ENCODE measurements at regions of chr10 and their contacts with region 1.

Region 1: GRCh38 chr10:5684318-5684970 is at the start of gene TASOR2:
- DNase-seq: peak; percentile 97
- H3K4me3 ChIP-seq: peak within 1 kb of the TSS; percentile 81
- H3K27ac ChIP-seq: peak within 1 kb of the TSS; percentile 77
- H3K4me1 ChIP-seq: peaks cover 47% of the 10 kb centered on the region
- CTCF ChIP-seq: no peak
- total RNA-seq, gene TASOR2: 103 and 113 TPM in 2 replicates

Region 2: DNA sequence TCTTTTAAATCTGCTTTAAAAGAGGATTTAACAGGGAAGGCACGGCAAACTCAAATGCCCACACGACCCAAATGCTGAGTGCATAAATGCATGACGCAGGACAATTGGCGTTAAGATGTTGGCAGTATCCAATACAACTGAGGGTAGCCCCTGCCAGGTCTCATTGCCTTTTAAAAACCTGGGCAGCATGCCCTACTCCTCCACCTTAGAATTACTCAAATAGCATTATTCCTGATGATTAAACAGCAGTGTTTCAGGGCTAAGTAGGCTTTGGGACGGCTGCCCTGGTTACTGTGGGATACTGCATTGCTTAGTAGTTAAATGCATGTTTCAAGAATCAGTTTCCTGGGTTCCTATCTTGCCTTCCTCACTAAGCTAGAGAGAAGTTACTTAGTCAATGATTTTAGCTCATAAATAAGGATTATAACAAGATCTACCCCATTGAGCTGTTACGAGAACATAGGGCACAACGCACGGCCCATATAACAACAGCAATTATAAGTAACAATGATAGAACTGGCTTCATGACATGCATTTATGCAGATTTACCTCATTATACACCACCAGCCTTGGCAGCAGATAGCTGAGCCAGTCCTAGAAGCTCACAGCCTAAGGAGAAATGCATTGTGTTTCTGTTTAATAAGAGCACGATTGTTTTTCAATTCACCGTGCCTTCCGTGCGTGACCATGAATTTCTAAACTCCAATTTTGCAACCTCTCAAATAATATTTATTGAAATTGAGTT is 287.7 kb before region 1 on chr10:
- CTCF ChIA-PET with region 1: no interaction called
- POLR2A ChIA-PET with region 1: no interaction called
- intact Hi-C with region 1: no loop called
- DNase-seq: no peak
- H3K4me3 ChIP-seq: no peak overlapping the region
- H3K27ac ChIP-seq: no peak overlapping the region
- H3K4me1 ChIP-seq: no peaks in the 10 kb centered on the region
- CTCF ChIP-seq: no peak

Region 3: GRCh38 chr10:5618042-5618441 is 66.4 kb before region 1 on chr10:
- CTCF ChIA-PET with region 1: no interaction called
- POLR2A ChIA-PET with region 1: no interaction called
- intact Hi-C with region 1: no loop called
- DNase-seq: no peak
- H3K4me3 ChIP-seq: no peak overlapping the region
- H3K27ac ChIP-seq: no peak overlapping the region
- H3K4me1 ChIP-seq: no peaks in the 10 kb centered on the region
- CTCF ChIP-seq: no peak

Region 4: DNA sequence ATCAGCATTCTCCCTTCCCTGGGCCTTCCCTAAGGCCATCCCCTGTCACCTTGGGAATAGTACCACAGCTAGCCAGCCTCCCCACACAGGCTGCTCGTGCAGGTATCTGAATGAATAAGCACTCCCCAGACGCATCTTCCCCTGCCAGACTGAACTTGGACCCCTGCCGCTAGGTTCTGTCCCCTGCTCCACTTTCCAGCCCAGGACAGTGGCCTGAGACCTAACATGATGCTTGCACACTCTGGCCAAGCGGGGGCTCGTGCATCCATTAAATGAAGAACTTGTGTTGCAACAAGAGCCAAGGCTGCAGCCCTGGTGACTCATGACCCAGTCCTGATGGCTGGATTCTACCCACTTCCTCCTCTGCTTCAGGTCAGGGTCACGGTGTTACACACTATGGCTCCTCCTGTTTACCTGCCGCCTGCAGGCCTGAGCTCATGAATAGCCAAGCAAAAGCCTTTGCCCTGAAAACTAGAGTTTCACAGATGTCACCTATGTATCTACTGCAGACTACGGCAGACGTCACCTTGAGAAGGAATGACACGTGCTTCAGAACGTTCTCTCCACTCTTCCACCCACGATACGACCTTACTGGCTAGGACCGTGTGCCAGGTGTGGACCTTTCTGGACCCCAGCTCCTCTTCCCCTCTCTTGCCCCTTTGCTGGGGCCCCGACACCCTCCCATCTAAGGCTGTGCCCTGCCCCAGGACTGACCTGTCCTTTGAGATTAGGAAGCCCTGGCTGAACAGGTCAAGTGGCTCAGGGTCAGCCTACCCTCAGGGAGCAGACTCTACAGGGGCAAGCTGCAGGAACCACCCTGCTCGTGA is 24.5 kb before region 1 on chr10:
- CTCF ChIA-PET with region 1: interaction called, 7 read pairs
- POLR2A ChIA-PET with region 1: interaction called, 142 read pairs
- intact Hi-C with region 1: loop called (anchors 2 kb)
- DNase-seq: peak; percentile 83
- H3K4me3 ChIP-seq: peak overlapping the region; percentile 30
- H3K27ac ChIP-seq: peak overlapping the region; percentile 100
- H3K4me1 ChIP-seq: peaks cover 98% of the 10 kb centered on the region
- CTCF ChIP-seq: no peak

Region 5: DNA sequence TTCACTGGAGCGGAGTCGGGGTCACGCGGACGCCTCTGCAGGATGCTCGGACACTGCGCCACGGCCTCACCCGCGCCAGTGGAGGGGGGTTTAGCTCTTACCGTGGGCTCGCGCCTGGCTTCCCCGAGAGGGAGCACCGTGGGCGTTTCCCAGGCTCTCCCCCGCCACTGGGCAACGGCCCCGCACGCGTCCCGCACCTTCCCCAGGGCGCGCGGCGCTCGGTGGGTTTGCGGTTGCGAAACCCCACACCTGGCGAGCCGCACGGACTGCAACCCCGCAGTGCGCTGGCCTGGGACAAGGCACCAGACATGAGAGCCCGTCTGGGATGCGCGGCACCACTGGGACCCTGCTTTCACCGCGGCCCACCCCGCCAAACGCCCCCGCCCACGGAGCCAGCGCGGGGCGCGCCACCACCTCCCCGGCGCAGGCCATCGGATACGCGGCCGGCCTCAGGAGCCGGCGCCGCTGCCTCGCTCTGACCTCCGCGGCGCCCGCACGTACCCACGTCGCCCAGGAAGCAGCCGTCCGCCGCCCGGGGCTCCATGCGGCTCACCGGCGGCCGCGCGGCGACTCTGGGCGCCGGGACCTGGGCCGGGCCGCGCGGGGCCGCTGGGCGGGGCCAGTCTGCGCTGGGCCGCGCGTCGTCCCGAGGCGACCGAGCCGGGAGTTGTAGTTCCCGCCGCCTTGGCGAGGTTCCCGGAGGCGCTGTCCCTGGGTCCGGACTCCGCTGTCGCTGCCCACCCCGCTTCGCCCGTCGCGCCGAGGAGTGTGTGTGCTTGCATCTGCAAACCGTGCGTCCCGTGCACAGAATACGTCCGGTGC is 18.2 kb before region 1 on chr10 and contains the start of gene ASB13:
- CTCF ChIA-PET with region 1: interaction called, 7 read pairs
- POLR2A ChIA-PET with region 1: interaction called, 142 read pairs
- intact Hi-C with region 1: no loop called
- DNase-seq: peak; percentile 55
- H3K4me3 ChIP-seq: peak within 1 kb of the TSS; percentile 78
- H3K27ac ChIP-seq: peak within 1 kb of the TSS; percentile 100
- H3K4me1 ChIP-seq: peaks cover 80% of the 10 kb centered on the region
- CTCF ChIP-seq: 0 out of 2 replicates have a peak, but pooled peaks have one; percentile 21
- total RNA-seq, gene ASB13: 23.2 and 25.6 TPM in 2 replicates

Region 6: GRCh38 chr10:5710859-5711258 is 26.4 kb after region 1 on chr10:
- CTCF ChIA-PET with region 1: no interaction called
- POLR2A ChIA-PET with region 1: interaction called, 7 read pairs
- intact Hi-C with region 1: loop called (anchors 1 kb)
- DNase-seq: no peak
- H3K4me3 ChIP-seq: no peak overlapping the region
- H3K27ac ChIP-seq: no peak overlapping the region
- H3K4me1 ChIP-seq: peaks cover 80% of the 10 kb centered on the region
- CTCF ChIP-seq: no peak

Region 7: GRCh38 chr10:5737352-5737751 is 52.9 kb after region 1 on chr10:
- CTCF ChIA-PET with region 1: no interaction called
- POLR2A ChIA-PET with region 1: no interaction called
- intact Hi-C with region 1: no loop called
- DNase-seq: peak; percentile 43
- H3K4me3 ChIP-seq: no peak overlapping the region
- H3K27ac ChIP-seq: no peak overlapping the region
- H3K4me1 ChIP-seq: peaks cover 35% of the 10 kb centered on the region
- CTCF ChIP-seq: peak; percentile 70

Region 8: DNA sequence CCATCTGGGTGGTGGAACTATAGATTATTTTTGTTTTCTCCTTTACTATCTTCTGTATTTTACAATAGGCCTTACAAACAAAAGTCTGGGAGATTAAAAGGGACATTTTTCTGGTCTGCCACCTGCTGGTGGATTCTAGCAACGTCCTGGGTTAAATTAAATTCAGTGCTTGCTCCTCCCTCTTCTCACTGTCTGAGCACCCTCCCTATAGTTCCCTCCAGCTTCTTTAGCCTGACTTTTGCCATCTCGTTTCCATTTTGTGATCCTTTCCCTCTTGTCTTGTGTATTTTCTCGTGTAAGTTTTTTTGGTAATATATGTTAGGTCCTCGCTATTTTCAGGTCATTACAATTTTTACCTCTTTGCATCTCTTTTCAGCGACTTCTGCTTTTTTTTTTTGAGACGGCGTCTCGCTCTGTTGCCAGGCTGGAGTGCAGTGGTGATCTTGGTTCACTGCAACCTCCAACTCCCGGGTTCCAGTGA is 189.1 kb after region 1 on chr10:
- CTCF ChIA-PET with region 1: no interaction called
- POLR2A ChIA-PET with region 1: no interaction called
- intact Hi-C with region 1: loop called (anchors 1 kb)
- DNase-seq: peak; percentile 79
- H3K4me3 ChIP-seq: no peak overlapping the region
- H3K27ac ChIP-seq: no peak overlapping the region
- H3K4me1 ChIP-seq: peaks cover 10% of the 10 kb centered on the region
- CTCF ChIP-seq: peak; percentile 86

Region 9: GRCh38 chr10:6136215-6137201 is 452.1 kb after region 1 on chr10:
- CTCF ChIA-PET with region 1: no interaction called
- POLR2A ChIA-PET with region 1: no interaction called
- intact Hi-C with region 1: no loop called
- DNase-seq: no peak
- H3K4me3 ChIP-seq: no peak overlapping the region
- H3K27ac ChIP-seq: no peak overlapping the region
- H3K4me1 ChIP-seq: peaks cover 23% of the 10 kb centered on the region
- CTCF ChIP-seq: no peak

Measured in OCI-LY7 (cell line).